ENCODE measurements at regions of chr2 and their contacts with region 1.

Region 1: GRCh38 chr2:174341286-174341994 is 6.7 kb downstream of the SP9 start:
- DNase-seq: peak; percentile 90
- H3K4me3 ChIP-seq: peak overlapping the region; percentile 24 to 34; a peak in 2 of 4 replicates
- H3K27ac ChIP-seq: no peak overlapping the region
- H3K4me1 ChIP-seq: peaks cover 0 to 27% of the 10 kb centered on the region in 2 experiments; a peak in 1 of 4 replicates
- H3K27me3 ChIP-seq: peaks cover 76% of the 10 kb centered on the region
- CTCF ChIP-seq: peak; percentile 99
- EP300 ChIP-seq: no peak
- RAD21 ChIP-seq: peak; percentile 96

Region 2: GRCh38 chr2:174326161-174327020 is 15.0 kb before region 1 on chr2:
- CTCF ChIA-PET with region 1: interaction called, 19 read pairs
- POLR2A ChIA-PET with region 1: no interaction called
- DNase-seq: no peak
- H3K4me3 ChIP-seq: peak overlapping the region; percentile 4 to 26; a peak in 2 of 4 replicates
- H3K27ac ChIP-seq: no peak overlapping the region
- H3K4me1 ChIP-seq: peaks cover 0 to 18% of the 10 kb centered on the region in 2 experiments; a peak in 3 of 4 replicates
- H3K27me3 ChIP-seq: peaks cover 63% of the 10 kb centered on the region
- CTCF ChIP-seq: no peak
- EP300 ChIP-seq: no peak
- RAD21 ChIP-seq: no peak

Region 3: GRCh38 chr2:174362949-174363348 is 21.5 kb after region 1 on chr2:
- CTCF ChIA-PET with region 1: interaction called, 10 read pairs
- POLR2A ChIA-PET with region 1: no interaction called
- DNase-seq: no peak
- H3K4me3 ChIP-seq: no peak overlapping the region
- H3K27ac ChIP-seq: no peak overlapping the region
- H3K4me1 ChIP-seq: no peaks in the 10 kb centered on the region
- H3K27me3 ChIP-seq: no peaks in the 10 kb centered on the region
- CTCF ChIP-seq: no peak
- EP300 ChIP-seq: no peak
- RAD21 ChIP-seq: no peak

Measured in SK-N-SH (cell line).